OCI-LY7 (cell line): ENCODE measurements at regions of chr11 and their contacts with region 1.

Region 1: GRCh38 chr11:66480117-66480938 is at the start of gene DPP3:
- DNase-seq: peak; percentile 98
- H3K4me3 ChIP-seq: peak within 1 kb of the TSS; percentile 89
- H3K27ac ChIP-seq: peak within 1 kb of the TSS; percentile 47
- H3K4me1 ChIP-seq: peaks cover 11% of the 10 kb centered on the region
- CTCF ChIP-seq: peak; percentile 30; the same call in 1 of the 2 replicates
- total RNA-seq, gene DPP3: 40.0 and 47.2 TPM in 2 replicates

Region 2: DNA sequence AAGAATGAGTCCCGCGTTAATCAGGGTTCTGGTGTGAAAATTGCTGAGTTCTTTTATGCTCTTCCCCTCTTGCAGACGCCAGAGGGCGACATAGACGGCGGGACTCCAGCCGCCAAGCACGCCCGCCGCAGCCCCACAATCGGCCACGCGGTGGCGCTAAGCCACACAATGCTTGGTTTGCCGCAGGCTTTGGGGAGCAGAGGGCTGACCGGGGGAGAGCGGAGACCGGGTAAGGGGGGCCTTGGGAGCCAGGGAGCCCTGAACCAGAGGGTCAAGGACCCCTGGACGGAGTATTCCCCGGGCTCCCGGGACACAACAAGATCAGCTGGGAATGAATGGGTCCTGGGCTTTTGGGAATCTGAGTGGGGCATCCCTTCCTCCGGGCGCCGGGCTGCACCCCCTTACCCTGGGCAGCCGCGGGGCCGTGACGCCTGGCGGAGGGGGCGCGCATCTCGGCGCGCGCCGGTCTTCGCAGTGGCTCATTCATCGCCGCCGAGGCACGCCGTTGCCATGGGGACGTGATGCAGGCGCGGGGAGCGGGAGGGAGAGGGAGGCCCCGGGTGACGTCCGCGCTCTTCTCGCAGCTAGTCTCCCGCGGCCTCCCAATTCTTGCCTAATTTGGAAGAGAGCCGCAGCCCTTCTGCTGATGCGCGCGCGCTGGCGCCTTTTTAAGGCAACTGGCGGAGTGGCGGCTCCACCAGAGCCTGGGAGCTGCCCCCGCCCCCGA is 71.7 kb before region 1 on chr11:
- CTCF ChIA-PET with region 1: interaction called, 3 read pairs
- POLR2A ChIA-PET with region 1: no interaction called
- intact Hi-C with region 1: loop called (anchors 1 kb)
- DNase-seq: peak; percentile 85
- H3K4me3 ChIP-seq: no peak overlapping the region
- H3K27ac ChIP-seq: no peak overlapping the region
- H3K4me1 ChIP-seq: peaks cover 4% of the 10 kb centered on the region
- CTCF ChIP-seq: peak; percentile 100

Region 3: GRCh38 chr11:66438504-66439466 is 41.5 kb before region 1 on chr11 and contains the start of gene MRPL11:
- CTCF ChIA-PET with region 1: interaction called, 3 read pairs
- POLR2A ChIA-PET with region 1: interaction called, 5 read pairs
- intact Hi-C with region 1: loop called (anchors 1 kb)
- DNase-seq: peak; percentile 95
- H3K4me3 ChIP-seq: peak within 1 kb of the TSS; percentile 90
- H3K27ac ChIP-seq: peak within 1 kb of the TSS; percentile 52
- H3K4me1 ChIP-seq: peaks cover 8% of the 10 kb centered on the region
- CTCF ChIP-seq: peak; percentile 84
- total RNA-seq, gene MRPL11: 82.6 and 101 TPM in 2 replicates

Region 4: GRCh38 chr11:66545701-66546367 is 65.5 kb after region 1 on chr11 and contains the start of gene ZDHHC24:
- CTCF ChIA-PET with region 1: no interaction called
- POLR2A ChIA-PET with region 1: no interaction called
- intact Hi-C with region 1: loop called (anchors 1 kb)
- DNase-seq: peak; percentile 91
- H3K4me3 ChIP-seq: peak within 1 kb of the TSS; percentile 89
- H3K27ac ChIP-seq: peak within 1 kb of the TSS; percentile 79
- H3K4me1 ChIP-seq: peaks cover 33% of the 10 kb centered on the region
- CTCF ChIP-seq: no peak
- total RNA-seq, gene ZDHHC24: 11.3 and 11.9 TPM in 2 replicates

Region 5: GRCh38 chr11:66842896-66843775 is 362.8 kb after region 1 on chr11 and contains the start of gene RCE1:
- CTCF ChIA-PET with region 1: no interaction called
- POLR2A ChIA-PET with region 1: interaction called, 3 read pairs
- intact Hi-C with region 1: loop called (anchors 5 kb)
- DNase-seq: peak; percentile 93
- H3K4me3 ChIP-seq: peak within 1 kb of the TSS; percentile 92
- H3K27ac ChIP-seq: peak within 1 kb of the TSS; percentile 81
- H3K4me1 ChIP-seq: peaks cover 39% of the 10 kb centered on the region
- CTCF ChIP-seq: no peak
- total RNA-seq, gene RCE1: 45.3 and 62.9 TPM in 2 replicates